ENCODE measurements at regions of chrX and their contacts with region 1.

Region 1: DNA sequence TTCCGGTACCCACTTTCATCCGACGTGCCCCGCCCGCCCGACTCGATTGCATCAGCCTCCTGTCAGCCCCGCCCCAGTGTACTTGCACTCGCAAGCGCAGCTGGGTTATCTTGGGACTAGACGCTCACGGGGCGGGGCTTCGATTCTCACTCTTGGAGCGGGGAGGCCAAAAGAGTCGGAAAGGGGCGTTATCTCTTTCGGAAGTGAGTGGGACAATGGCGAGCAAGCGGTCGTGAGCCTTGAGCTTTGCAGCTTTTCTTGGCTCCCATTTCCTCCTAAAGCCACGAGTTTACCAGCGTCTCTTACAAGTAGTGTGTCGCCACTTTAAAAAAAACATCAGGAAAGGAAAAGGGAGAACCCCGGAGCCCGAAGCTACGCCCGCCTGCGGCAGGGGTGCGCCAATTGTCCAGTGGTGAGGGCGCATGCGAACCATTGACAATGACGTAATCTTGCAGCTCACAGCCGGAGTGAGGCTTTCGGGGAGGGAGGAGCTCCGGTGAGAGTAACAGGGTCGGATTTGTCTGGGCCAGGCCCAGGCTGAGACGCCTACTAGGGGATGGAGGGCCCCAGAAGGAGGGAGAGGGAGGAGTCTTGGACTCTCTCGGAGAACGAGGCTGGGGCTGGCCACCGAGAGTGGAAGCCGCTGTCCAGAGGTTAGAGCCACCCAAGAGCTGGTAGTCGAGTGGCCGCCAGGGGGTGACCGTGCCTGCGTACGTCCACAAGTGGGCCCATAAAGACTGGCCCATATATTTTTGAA is 109.5 kb downstream of the GNL3L start:
- DNase-seq: peak; percentile 85 to 97
- H3K4me3 ChIP-seq: peak overlapping the region; percentile 53 to 54
- H3K27ac ChIP-seq: peak overlapping the region; percentile 80 to 87
- H3K4me1 ChIP-seq: no peaks in the 10 kb centered on the region
- H3K27me3 ChIP-seq: no peaks in the 10 kb centered on the region
- CTCF ChIP-seq: peak; percentile 55 to 56 (median 55)

Region 2: GRCh38 chrX:53683556-53684414 is 955.7 kb before region 1 on chrX:
- intact Hi-C with region 1: loop called (anchors 2 kb)
- DNase-seq: peak; percentile 84 to 96
- H3K4me3 ChIP-seq: peak overlapping the region; percentile 56 to 71
- H3K27ac ChIP-seq: peak overlapping the region; percentile 86 to 89
- H3K4me1 ChIP-seq: no peaks in the 10 kb centered on the region
- H3K27me3 ChIP-seq: no peaks in the 10 kb centered on the region
- CTCF ChIP-seq: no peak

Region 3: GRCh38 chrX:54357414-54358377 is 281.8 kb before region 1 on chrX and contains the start of gene WNK3:
- intact Hi-C with region 1: loop called (anchors 2 kb)
- DNase-seq: peak; percentile 18 to 86
- H3K4me3 ChIP-seq: peak within 1 kb of the TSS; percentile 56 to 67
- H3K27ac ChIP-seq: peak within 1 kb of the TSS; percentile 84 to 86
- H3K4me1 ChIP-seq: no peaks in the 10 kb centered on the region
- H3K27me3 ChIP-seq: no peaks in the 10 kb centered on the region
- CTCF ChIP-seq: no peak
- total RNA-seq, gene WNK3: 3.3 TPM

Region 4: GRCh38 chrX:54529552-54530357 is 109.8 kb before region 1 on chrX and contains the start of gene GNL3L:
- intact Hi-C with region 1: loop called (anchors 1 kb)
- DNase-seq: peak; percentile 60 to 92
- H3K4me3 ChIP-seq: peak within 1 kb of the TSS; percentile 69 to 79
- H3K27ac ChIP-seq: peak within 1 kb of the TSS; percentile 65 to 73
- H3K4me1 ChIP-seq: no peaks in the 10 kb centered on the region
- H3K27me3 ChIP-seq: no peaks in the 10 kb centered on the region
- CTCF ChIP-seq: no peak
- total RNA-seq, gene GNL3L: 15.4 TPM

Region 5: GRCh38 chrX:54675762-54676161 is 36.2 kb after region 1 on chrX:
- intact Hi-C with region 1: no loop called
- DNase-seq: no peak
- H3K4me3 ChIP-seq: no peak overlapping the region
- H3K27ac ChIP-seq: no peak overlapping the region
- H3K4me1 ChIP-seq: no peaks in the 10 kb centered on the region
- H3K27me3 ChIP-seq: no peaks in the 10 kb centered on the region
- CTCF ChIP-seq: no peak

Region 6: GRCh38 chrX:54921427-54922021 is 282.0 kb after region 1 on chrX:
- intact Hi-C with region 1: loop called (anchors 2 kb)
- DNase-seq: no peak
- H3K4me3 ChIP-seq: peak overlapping the region; percentile 48 to 58
- H3K27ac ChIP-seq: peak overlapping the region; percentile 31 to 42
- H3K4me1 ChIP-seq: no peaks in the 10 kb centered on the region
- H3K27me3 ChIP-seq: no peaks in the 10 kb centered on the region
- CTCF ChIP-seq: peak in 1 of 3 experiments; percentile 3

Region 7: GRCh38 chrX:55057675-55058249 is 418.2 kb after region 1 on chrX:
- intact Hi-C with region 1: loop called (anchors 5 kb)
- DNase-seq: peak in 1 of 2 donors; percentile 62
- H3K4me3 ChIP-seq: peak overlapping the region in 1 of 2 donors; percentile 58
- H3K27ac ChIP-seq: no peak overlapping the region
- H3K4me1 ChIP-seq: no peaks in the 10 kb centered on the region
- H3K27me3 ChIP-seq: no peaks in the 10 kb centered on the region
- CTCF ChIP-seq: peak; percentile 36 to 79 (median 71)

Region 8: GRCh38 chrX:55717521-55718497 is 1078.3 kb after region 1 on chrX and contains the start of gene RRAGB:
- intact Hi-C with region 1: loop called (anchors 10 kb)
- DNase-seq: peak; percentile 93 to 96
- H3K4me3 ChIP-seq: peak within 1 kb of the TSS; percentile 59 to 81
- H3K27ac ChIP-seq: peak within 1 kb of the TSS; percentile 73 to 85
- H3K4me1 ChIP-seq: peaks cover 0 to 4% of the 10 kb centered on the region in 2 donors
- H3K27me3 ChIP-seq: no peaks in the 10 kb centered on the region
- CTCF ChIP-seq: peak; percentile 4 to 60 (median 49)
- total RNA-seq, gene RRAGB: 9.9 TPM

Measured in ascending aorta (tissue), 2 donors.